ENCODE measurements at regions of chr12 and their contacts with region 1.

Region 1: DNA sequence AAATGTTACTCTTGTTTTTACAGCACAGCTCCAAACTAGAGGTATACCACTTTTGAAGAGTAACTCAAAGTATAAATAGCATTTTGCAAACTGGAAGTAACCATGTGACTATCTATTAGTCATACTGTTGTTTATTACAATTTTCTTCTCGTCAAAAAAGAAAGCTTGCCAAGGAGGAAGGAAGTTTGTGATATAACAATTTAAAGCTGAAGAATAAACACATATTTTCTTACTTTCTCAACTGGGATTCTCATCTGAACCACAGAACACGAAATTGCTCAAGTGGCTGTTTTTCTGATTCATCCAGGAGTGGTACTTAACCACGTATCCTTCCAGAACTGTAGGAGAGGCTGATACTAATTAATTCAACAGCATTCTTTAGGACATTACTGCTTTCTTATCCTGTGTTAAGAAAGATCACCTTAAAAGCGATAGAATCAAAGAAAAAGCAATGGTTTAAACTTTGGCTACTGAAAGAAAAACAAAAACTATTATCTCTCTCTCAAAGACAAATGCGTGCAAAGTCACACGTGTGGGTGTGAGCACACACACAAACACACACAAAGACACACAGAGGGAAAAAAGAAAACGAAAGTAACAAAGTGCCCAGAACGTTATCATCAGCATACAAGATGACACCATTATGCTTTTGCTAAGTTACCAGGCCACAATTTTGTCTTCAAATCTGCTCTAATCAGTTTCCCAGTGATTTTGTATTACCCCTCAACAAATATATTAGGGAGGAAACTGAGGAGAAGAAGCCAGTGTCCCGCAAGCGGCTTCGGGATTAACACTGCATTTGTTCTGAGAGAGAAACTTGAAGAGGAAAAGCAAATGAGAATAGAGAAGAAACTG is at the start of gene CLEC2B:
- DNase-seq: peak; percentile 80
- H3K4me3 Mint-ChIP-seq: peak within 1 kb of the TSS; percentile 92
- H3K27ac Mint-ChIP-seq: peak within 1 kb of the TSS; percentile 93
- H3K4me1 Mint-ChIP-seq: peaks cover 28% of the 10 kb centered on the region
- H3K27me3 Mint-ChIP-seq: no peaks in the 10 kb centered on the region
- total RNA-seq, gene CLEC2B: 13.0 and 13.1 TPM in 2 replicates

Region 2: GRCh38 chr12:8519171-8519570 is 1350.4 kb before region 1 on chr12:
- intact Hi-C with region 1: no loop called
- DNase-seq: no peak
- H3K4me3 Mint-ChIP-seq: no peak overlapping the region
- H3K27ac Mint-ChIP-seq: no peak overlapping the region
- H3K4me1 Mint-ChIP-seq: no peaks in the 10 kb centered on the region
- H3K27me3 Mint-ChIP-seq: peaks cover 41% of the 10 kb centered on the region

Region 3: DNA sequence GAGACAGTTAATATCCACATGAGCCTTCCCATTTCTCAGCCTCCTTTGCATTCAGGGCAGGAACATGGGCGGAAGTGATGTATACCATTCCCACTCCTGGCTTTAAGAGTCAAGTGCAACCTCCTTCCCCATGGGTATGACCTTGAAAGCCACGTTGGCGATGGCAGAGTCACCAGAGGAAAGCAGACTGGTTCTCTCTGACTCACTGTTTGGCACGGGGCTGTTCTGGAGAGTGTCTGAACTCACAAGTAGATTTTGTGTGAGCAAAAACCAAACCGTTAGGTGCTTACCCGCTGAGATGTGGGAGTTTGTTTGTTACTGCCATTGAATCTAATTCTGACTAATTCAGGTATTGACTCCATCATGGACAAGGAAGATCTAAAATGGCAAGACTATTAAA is 624.6 kb before region 1 on chr12:
- intact Hi-C with region 1: loop called (anchors 5 kb)
- DNase-seq: peak; percentile 66
- H3K4me3 Mint-ChIP-seq: peak overlapping the region; percentile 15
- H3K27ac Mint-ChIP-seq: peak overlapping the region; percentile 96
- H3K4me1 Mint-ChIP-seq: peaks cover 29% of the 10 kb centered on the region
- H3K27me3 Mint-ChIP-seq: peaks cover 16% of the 10 kb centered on the region

Region 4: DNA sequence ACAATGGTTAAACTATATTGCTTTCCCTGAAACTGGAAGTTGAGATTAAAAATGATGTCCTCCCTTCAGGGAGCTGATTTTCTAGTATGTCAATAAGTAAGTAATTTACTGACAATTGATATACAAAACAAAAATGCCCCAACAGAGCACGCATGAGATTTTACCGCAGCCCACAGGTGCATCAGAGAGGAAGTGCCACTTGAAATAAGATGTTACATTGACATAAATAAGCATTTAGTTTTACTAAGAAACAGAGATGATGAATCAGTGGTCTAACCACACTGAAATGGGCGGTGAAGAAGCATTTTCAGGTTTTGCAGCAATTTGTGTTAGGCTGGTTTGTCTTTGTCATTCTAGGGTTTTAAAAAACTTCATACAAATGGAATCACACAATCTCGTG is 127.8 kb before region 1 on chr12:
- intact Hi-C with region 1: loop called (anchors 2 kb)
- DNase-seq: peak; percentile 94
- H3K4me3 Mint-ChIP-seq: peak overlapping the region; percentile 57
- H3K27ac Mint-ChIP-seq: peak overlapping the region; percentile 96
- H3K4me1 Mint-ChIP-seq: peaks cover 61% of the 10 kb centered on the region
- H3K27me3 Mint-ChIP-seq: no peaks in the 10 kb centered on the region

Region 5: GRCh38 chr12:9813821-9814809 is 55.4 kb before region 1 on chr12:
- intact Hi-C with region 1: loop called (anchors 2 kb)
- DNase-seq: peak; percentile 98
- H3K4me3 Mint-ChIP-seq: peak overlapping the region; percentile 91
- H3K27ac Mint-ChIP-seq: peak overlapping the region; percentile 75
- H3K4me1 Mint-ChIP-seq: peaks cover 26% of the 10 kb centered on the region
- H3K27me3 Mint-ChIP-seq: peaks cover 24% of the 10 kb centered on the region

Region 6: DNA sequence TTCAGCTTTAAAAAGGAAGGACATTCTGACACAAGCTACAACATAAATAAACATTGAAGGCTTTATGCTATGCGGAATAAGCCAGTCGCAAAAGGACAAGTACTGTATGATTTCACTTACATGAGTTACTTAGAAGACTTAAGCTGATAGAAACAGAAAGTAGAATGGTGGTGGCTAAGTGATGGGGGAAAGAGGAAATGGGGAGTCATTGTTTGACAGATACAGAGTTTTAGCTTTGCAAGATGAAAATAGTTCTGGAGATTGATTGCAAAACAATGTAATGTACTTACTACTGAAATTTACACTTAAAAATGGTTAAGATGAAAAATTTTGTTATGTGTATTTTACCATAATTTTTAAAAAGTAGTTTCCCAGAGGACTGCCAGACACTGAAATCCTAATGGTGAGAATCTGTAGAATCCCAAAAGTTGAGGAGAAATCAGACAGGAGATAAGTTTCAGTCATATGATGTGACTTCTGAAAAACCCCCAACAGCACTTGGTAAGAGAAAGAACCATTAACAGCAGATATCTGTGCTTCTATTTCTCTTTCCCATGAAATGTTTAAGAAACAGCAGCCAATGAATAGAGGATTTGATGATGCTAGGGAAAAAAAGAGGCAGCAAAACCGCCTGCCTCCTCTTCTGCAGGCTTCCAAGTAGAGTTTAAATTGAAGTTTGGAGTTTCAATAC is 79.2 kb after region 1 on chr12:
- intact Hi-C with region 1: loop called (anchors 2 kb)
- DNase-seq: peak; percentile 78
- H3K4me3 Mint-ChIP-seq: peak overlapping the region; percentile 27
- H3K27ac Mint-ChIP-seq: peak overlapping the region; percentile 52
- H3K4me1 Mint-ChIP-seq: peaks cover 52% of the 10 kb centered on the region
- H3K27me3 Mint-ChIP-seq: no peaks in the 10 kb centered on the region

Measured in activated CD4-positive, alpha-beta T cell treated with anti-CD3 and anti-CD28 coated beads, Interleukin-2, amount 10 ng/mL, durations not matched to agents 24 days and 14 days (primary cell).